ENCODE measurements at regions of chr3 and their contacts with region 1.

Region 1: GRCh38 chr3:172106989-172107388 is 67.6 kb downstream of the FNDC3B start:
- DNase-seq: peak; percentile 70
- ATAC-seq: peak; percentile 67
- H3K4me3 ChIP-seq: peak overlapping the region; percentile 20; the same call in 1 of the 2 replicates
- H3K27ac ChIP-seq: peak overlapping the region; percentile 81
- H3K4me1 ChIP-seq: peaks cover 53% of the 10 kb centered on the region
- H3K27me3 ChIP-seq: no peaks in the 10 kb centered on the region
- CTCF ChIP-seq: no peak
- EP300 ChIP-seq: peak in 1 of 2 experiments; percentile 74; a peak in 2 of 4 replicates
- POLR2A ChIP-seq: no peak
- RAD21 ChIP-seq: no peak

Region 2: GRCh38 chr3:171954639-171955365 is 152.2 kb before region 1 on chr3:
- CTCF ChIA-PET with region 1: no interaction called
- POLR2A ChIA-PET with region 1: no interaction called
- RAD21 ChIA-PET with region 1: no interaction called
- SMC1A ChIA-PET with region 1: no interaction called
- in situ Hi-C with region 1: no loop called
- intact Hi-C with region 1: no loop called
- DNase-seq: no peak
- ATAC-seq: no peak
- H3K4me3 ChIP-seq: no peak overlapping the region
- H3K27ac ChIP-seq: no peak overlapping the region
- H3K4me1 ChIP-seq: no peaks in the 10 kb centered on the region
- H3K27me3 ChIP-seq: no peaks in the 10 kb centered on the region
- CTCF ChIP-seq: no peak
- EP300 ChIP-seq: no peak
- POLR2A ChIP-seq: no peak
- RAD21 ChIP-seq: no peak

Region 3: DNA sequence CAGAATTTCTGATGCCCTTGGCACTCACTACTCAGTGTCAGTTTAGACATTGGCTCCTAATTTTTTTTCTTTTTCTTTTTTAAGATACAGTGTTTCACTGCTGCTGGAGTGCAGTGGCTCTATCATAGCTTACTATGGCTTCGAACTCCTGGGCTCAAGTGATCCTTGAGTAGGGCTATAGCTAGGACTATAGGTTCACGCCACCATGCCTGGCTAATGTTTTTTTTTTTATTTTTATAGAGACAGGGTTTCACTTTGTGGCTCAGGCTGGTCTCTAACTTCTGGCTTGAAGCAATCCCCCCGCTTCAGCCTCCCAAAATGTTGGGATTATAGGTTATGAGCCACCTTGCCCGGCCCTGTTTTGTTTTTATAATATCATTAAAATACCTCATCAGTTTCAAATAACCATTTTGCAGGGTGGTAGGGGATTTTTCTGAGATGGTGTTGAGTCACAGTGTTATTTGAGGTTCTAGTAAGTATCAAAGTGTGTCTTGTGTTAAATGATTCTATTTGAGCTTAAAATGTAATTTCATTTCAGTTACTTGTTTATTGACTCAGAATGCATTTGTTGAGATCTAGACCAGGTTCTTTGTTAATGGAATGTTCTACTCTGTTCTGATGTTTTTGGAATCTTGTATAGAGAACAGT is 60.6 kb before region 1 on chr3:
- CTCF ChIA-PET with region 1: interaction called, 8 read pairs
- POLR2A ChIA-PET with region 1: interaction called, 8 read pairs
- RAD21 ChIA-PET with region 1: interaction called, 70 read pairs
- SMC1A ChIA-PET with region 1: interaction called, 110 read pairs
- in situ Hi-C with region 1: no loop called
- intact Hi-C with region 1: no loop called
- DNase-seq: no peak
- ATAC-seq: peak; percentile 64
- H3K4me3 ChIP-seq: no peak overlapping the region; the same call in 1 of the 2 replicates
- H3K27ac ChIP-seq: peak overlapping the region; percentile 18; the same call in 1 of the 2 replicates
- H3K4me1 ChIP-seq: no peaks in the 10 kb centered on the region
- H3K27me3 ChIP-seq: no peaks in the 10 kb centered on the region
- CTCF ChIP-seq: no peak
- EP300 ChIP-seq: no peak
- POLR2A ChIP-seq: no peak
- RAD21 ChIP-seq: no peak

Region 4: GRCh38 chr3:172087602-172088580 is 19.1 kb before region 1 on chr3:
- CTCF ChIA-PET with region 1: interaction called, 16 read pairs
- POLR2A ChIA-PET with region 1: interaction called, 10 read pairs
- RAD21 ChIA-PET with region 1: interaction called, 10 read pairs
- SMC1A ChIA-PET with region 1: interaction called, 169 read pairs
- in situ Hi-C with region 1: no loop called
- intact Hi-C with region 1: no loop called
- DNase-seq: peak; percentile 45
- ATAC-seq: peak; percentile 87
- H3K4me3 ChIP-seq: no peak overlapping the region
- H3K27ac ChIP-seq: no peak overlapping the region
- H3K4me1 ChIP-seq: peaks cover 17% of the 10 kb centered on the region
- H3K27me3 ChIP-seq: no peaks in the 10 kb centered on the region
- CTCF ChIP-seq: no peak
- EP300 ChIP-seq: peak in 1 of 2 experiments; percentile 47; a peak in 2 of 4 replicates
- POLR2A ChIP-seq: no peak
- RAD21 ChIP-seq: no peak

Region 5: GRCh38 chr3:172138795-172139441 is 31.9 kb after region 1 on chr3:
- CTCF ChIA-PET with region 1: interaction called, 30 read pairs
- POLR2A ChIA-PET with region 1: interaction called, 13 read pairs
- RAD21 ChIA-PET with region 1: interaction called, 92 read pairs
- SMC1A ChIA-PET with region 1: interaction called, 71 read pairs
- in situ Hi-C with region 1: no loop called
- intact Hi-C with region 1: loop called (anchors 1 kb)
- DNase-seq: peak; percentile 89
- ATAC-seq: peak; percentile 51
- H3K4me3 ChIP-seq: no peak overlapping the region
- H3K27ac ChIP-seq: peak overlapping the region; percentile 80
- H3K4me1 ChIP-seq: peaks cover 73% of the 10 kb centered on the region
- H3K27me3 ChIP-seq: no peaks in the 10 kb centered on the region
- CTCF ChIP-seq: no peak
- EP300 ChIP-seq: peak; percentile 39 to 60; a peak in 2 of 4 replicates
- POLR2A ChIP-seq: no peak
- RAD21 ChIP-seq: peak; percentile 23; the same call in 1 of the 2 replicates

Region 6: GRCh38 chr3:172181932-172182586 is 75.1 kb after region 1 on chr3:
- CTCF ChIA-PET with region 1: no interaction called
- POLR2A ChIA-PET with region 1: interaction called, 5 read pairs
- RAD21 ChIA-PET with region 1: interaction called, 11 read pairs
- SMC1A ChIA-PET with region 1: interaction called, 7 read pairs
- in situ Hi-C with region 1: no loop called
- intact Hi-C with region 1: no loop called
- DNase-seq: no peak
- ATAC-seq: peak; percentile 50
- H3K4me3 ChIP-seq: no peak overlapping the region
- H3K27ac ChIP-seq: peak overlapping the region; percentile 9
- H3K4me1 ChIP-seq: peaks cover 41% of the 10 kb centered on the region
- H3K27me3 ChIP-seq: no peaks in the 10 kb centered on the region
- CTCF ChIP-seq: no peak
- EP300 ChIP-seq: no peak
- POLR2A ChIP-seq: no peak
- RAD21 ChIP-seq: no peak

Measured in GM12878 (cell line).